Ascending aorta (tissue), 2 donors: ENCODE measurements at regions of chr2 and their contacts with region 1.

Region 1: DNA sequence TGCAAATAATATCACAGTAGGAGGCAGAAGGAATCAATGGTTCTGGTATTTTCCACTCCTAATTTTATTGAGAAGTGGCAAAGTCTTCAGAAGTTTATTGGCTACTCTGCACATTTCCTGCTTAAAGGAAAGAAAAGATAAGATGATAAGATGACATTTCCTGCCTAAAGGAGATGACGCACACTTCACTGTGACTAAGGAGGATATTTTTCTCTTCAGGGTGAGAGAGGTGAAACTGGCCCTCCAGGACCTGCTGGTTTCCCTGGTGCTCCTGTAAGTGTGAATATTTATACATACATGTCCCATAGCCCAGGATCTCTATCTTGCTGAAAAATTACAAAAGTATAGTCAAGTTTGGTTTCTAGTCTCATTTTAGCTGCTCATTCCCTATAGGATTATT is 27.9 kb downstream of the COL3A1 start:
- DNase-seq: no peak
- H3K4me3 ChIP-seq: no peak overlapping the region
- H3K27ac ChIP-seq: peak overlapping the region; percentile 41 to 55
- H3K4me1 ChIP-seq: no peaks in the 10 kb centered on the region
- H3K27me3 ChIP-seq: no peaks in the 10 kb centered on the region
- CTCF ChIP-seq: no peak

Region 2: GRCh38 chr2:188788621-188789020 is 213.5 kb before region 1 on chr2:
- intact Hi-C with region 1: no loop called
- DNase-seq: peak; percentile 15 to 88
- H3K4me3 ChIP-seq: no peak overlapping the region
- H3K27ac ChIP-seq: peak overlapping the region; percentile 68 to 80
- H3K4me1 ChIP-seq: peaks cover 0 to 28% of the 10 kb centered on the region in 2 donors
- H3K27me3 ChIP-seq: no peaks in the 10 kb centered on the region
- CTCF ChIP-seq: no peak

Region 3: GRCh38 chr2:188978291-188979081 is 23.6 kb before region 1 on chr2:
- intact Hi-C with region 1: no loop called
- DNase-seq: no peak
- H3K4me3 ChIP-seq: peak overlapping the region; percentile 53 to 73
- H3K27ac ChIP-seq: peak overlapping the region; percentile 83 to 85
- H3K4me1 ChIP-seq: peaks cover 3 to 23% of the 10 kb centered on the region in 2 donors
- H3K27me3 ChIP-seq: no peaks in the 10 kb centered on the region
- CTCF ChIP-seq: peak in 2 of 3 experiments; percentile 46 to 57

Region 4: DNA sequence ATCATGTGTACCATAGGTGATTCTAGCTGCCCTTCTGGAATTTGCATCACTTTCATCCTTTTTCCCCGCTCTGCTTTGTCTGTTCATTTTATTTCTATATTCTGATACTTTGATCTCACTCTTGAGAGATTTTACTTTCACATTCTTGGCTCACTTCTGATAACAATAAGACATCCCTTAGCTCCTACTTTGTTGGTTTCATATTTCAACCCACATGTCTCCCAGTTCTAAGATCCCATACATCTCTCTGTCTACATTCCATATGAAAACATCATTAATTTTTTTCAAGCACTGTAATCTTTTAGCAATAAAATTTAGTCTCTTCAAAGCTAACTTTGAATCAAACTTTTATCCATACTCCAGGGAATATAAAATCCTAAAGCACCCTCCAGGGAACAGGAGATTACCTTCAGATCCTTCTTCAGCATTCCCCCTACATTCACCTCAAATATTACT is 47.7 kb after region 1 on chr2:
- intact Hi-C with region 1: loop called (anchors 5 kb)
- DNase-seq: no peak
- H3K4me3 ChIP-seq: no peak overlapping the region
- H3K27ac ChIP-seq: no peak overlapping the region
- H3K4me1 ChIP-seq: no peaks in the 10 kb centered on the region
- H3K27me3 ChIP-seq: no peaks in the 10 kb centered on the region
- CTCF ChIP-seq: no peak

Region 5: GRCh38 chr2:189249171-189249570 is 247.1 kb after region 1 on chr2:
- intact Hi-C with region 1: no loop called
- DNase-seq: no peak
- H3K4me3 ChIP-seq: no peak overlapping the region
- H3K27ac ChIP-seq: peak overlapping the region in 1 of 2 donors; percentile 48
- H3K4me1 ChIP-seq: peaks cover 2 to 16% of the 10 kb centered on the region in 2 donors
- H3K27me3 ChIP-seq: no peaks in the 10 kb centered on the region
- CTCF ChIP-seq: no peak